GM13976 (cell line): ENCODE measurements at regions of chr16 and their contacts with region 1.

Region 1: DNA sequence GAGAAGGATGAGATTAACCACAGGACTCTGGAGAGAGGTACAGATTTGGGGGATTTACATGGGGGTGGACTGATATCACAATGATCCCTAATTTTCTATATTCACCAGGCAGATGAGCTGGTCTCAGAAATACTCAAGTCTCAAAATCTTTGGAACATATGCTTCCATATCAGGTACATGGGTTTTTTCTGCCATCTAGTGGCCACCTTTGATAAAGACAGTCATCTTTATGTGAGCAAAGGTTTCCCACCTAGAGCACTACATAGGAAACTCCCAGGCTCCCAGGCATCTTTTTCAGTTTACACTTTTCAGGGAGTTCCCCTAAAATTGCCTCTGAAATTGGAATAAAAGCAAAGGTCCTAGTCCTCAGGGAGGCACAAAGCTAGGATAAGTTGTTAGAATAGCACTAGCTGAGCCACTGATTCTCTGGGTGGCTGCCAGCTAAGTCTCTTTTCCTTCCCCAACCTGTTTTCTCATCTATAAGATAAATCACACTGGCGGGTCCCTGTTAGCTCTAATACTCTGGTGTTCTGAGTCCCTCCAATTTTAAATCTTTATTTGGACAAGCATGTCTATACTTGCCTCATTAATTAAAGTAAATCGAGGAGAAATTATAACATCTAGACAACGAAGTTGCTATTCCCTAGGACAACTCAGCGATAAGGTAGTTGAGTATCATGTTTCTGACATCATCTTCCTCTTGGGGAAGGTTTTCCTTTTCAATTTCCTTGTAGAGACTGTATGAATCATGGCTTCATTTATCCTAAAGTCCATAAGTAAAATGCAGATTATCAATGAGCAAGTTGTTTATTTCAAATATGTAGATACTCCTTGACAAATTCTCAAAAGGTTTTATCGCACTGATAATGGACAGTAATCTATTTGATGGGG is 19.0 kb upstream of the MON1B start:
- DNase-seq: peak; percentile 53
- CTCF ChIP-seq: peak; percentile 62

Region 2: GRCh38 chr16:75789237-75789636 is 1382.8 kb before region 1 on chr16:
- in situ Hi-C with region 1: loop called (anchors 25 kb)
- DNase-seq: peak; percentile 71
- CTCF ChIP-seq: peak; percentile 49

Region 3: DNA sequence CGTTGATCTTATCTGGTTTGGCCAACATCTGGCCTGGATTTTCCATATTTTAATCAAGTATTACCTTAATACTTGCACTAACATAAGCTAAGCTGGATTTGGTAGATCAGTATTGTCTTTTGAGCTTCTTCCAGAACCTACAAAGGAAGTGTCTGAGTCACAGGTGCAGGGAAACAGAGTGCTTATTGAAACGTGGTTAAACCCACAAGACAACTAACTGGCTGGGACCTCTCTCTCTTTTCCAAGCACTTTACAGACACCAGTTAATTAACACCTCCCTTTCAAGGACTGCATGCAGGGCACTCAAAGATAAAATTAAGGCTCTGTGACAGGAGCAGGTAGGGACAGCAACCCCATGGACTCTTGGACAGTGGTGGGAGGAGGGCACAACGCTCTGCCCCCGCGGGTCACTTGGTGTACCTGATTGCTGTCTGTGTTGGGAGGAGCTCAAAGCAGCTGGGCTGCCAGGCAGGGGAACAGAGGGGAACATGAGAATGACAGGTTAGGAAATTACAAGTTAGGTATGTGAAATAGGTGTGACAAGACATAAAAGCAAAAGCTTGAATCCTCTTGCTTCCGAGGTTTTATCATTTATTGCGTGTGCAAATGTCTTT is 114.7 kb before region 1 on chr16:
- in situ Hi-C with region 1: no loop called
- DNase-seq: no peak
- CTCF ChIP-seq: no peak

Region 4: GRCh38 chr16:77113835-77114234 is 58.2 kb before region 1 on chr16:
- in situ Hi-C with region 1: no loop called
- DNase-seq: no peak
- CTCF ChIP-seq: no peak

Region 5: GRCh38 chr16:77480681-77481315 is 308.8 kb after region 1 on chr16:
- in situ Hi-C with region 1: no loop called
- DNase-seq: no peak
- CTCF ChIP-seq: no peak